Activated B cell treated with CpG ODN at 0.5 μM for 24 hours (primary cell): ENCODE measurements at regions of chr20 and their contacts with region 1.

Region 1: DNA sequence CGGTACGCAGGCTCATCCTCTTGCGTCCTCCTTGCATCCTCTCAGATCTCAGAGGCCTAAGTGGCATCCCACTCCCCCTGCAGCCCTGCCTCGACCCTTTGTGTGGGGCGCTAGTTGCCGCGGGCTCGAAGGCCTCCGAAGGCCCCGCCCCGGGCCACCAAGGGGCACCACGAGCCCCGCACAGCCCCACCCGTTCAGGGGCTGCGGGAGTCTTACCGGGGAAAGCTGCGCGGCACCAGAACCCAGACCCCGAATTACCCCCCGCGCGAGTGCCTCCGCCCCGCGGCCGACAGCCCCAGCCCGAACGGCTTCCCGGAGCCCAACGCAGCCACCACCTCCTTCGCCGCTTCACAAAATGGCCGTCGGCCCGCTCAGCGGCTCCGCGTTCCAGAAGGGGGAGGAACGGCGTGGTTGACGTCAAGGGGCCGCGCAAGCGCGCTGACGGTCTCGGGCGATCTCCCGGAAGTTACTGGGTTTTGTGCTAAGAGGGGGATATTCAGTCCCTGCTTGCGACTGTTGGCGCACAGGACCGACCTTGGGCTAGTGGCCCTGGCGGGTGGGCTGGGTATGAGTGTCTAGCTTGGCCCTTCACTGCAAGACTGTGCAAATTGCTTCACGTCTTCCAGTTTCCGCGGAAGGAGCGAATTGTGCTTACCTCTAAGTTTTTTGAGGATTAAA is at the starts of genes CPNE1 and RBM12:
- DNase-seq: peak; percentile 94
- ATAC-seq: peak; percentile 77
- H3K4me3 Mint-ChIP-seq: peak within 1 kb of the TSS; percentile 94
- H3K27ac Mint-ChIP-seq: peak within 1 kb of the TSS; percentile 99
- H3K4me1 Mint-ChIP-seq: peaks cover 48% of the 10 kb centered on the region
- H3K27me3 Mint-ChIP-seq: no peaks in the 10 kb centered on the region
- CTCF ChIP-seq: no peak
- total RNA-seq, gene CPNE1: 234 and 264 TPM in 2 replicates
- total RNA-seq, gene RBM12: 129 and 139 TPM in 2 replicates

Region 2: DNA sequence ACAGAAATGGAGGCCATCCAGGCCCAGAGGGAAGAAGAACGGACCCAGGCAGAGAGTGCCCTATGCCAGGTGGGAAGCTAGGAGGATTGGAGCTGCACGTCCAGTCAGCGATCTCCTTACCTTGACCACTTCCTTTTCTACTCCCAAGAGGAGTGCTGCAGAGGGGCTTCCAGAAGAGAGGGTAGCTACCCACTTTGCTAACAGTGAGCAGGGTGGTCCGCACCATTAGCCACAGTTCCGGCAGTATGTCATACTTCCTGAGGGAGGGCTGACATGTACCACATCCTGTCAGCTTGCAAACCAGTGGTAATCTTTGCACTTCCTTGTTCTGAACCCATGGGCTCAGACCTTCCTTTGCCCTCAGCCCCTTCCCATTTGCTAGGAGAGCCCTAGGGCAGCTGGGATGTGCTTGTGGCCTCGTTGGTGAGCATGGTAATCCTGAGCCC is 173.9 kb before region 1 on chr20:
- CTCF ChIA-PET with region 1: no interaction called
- POLR2A ChIA-PET with region 1: interaction called, 10 read pairs
- intact Hi-C with region 1: no loop called
- DNase-seq: peak; percentile 44
- ATAC-seq: peak; percentile 99
- H3K4me3 Mint-ChIP-seq: peak overlapping the region; percentile 98
- H3K27ac Mint-ChIP-seq: peak overlapping the region; percentile 98
- H3K4me1 Mint-ChIP-seq: peaks cover 45% of the 10 kb centered on the region
- H3K27me3 Mint-ChIP-seq: no peaks in the 10 kb centered on the region
- CTCF ChIP-seq: no peak

Region 3: GRCh38 chr20:35601008-35601973 is 63.4 kb before region 1 on chr20:
- CTCF ChIA-PET with region 1: interaction called, 3 read pairs
- POLR2A ChIA-PET with region 1: interaction called, 10 read pairs
- intact Hi-C with region 1: loop called (anchors 5 kb)
- DNase-seq: peak; percentile 58
- ATAC-seq: peak; percentile 78
- H3K4me3 Mint-ChIP-seq: peak overlapping the region; percentile 81
- H3K27ac Mint-ChIP-seq: no peak overlapping the region
- H3K4me1 Mint-ChIP-seq: peaks cover 13% of the 10 kb centered on the region
- H3K27me3 Mint-ChIP-seq: peaks cover 29% of the 10 kb centered on the region
- CTCF ChIP-seq: no peak

Region 4: DNA sequence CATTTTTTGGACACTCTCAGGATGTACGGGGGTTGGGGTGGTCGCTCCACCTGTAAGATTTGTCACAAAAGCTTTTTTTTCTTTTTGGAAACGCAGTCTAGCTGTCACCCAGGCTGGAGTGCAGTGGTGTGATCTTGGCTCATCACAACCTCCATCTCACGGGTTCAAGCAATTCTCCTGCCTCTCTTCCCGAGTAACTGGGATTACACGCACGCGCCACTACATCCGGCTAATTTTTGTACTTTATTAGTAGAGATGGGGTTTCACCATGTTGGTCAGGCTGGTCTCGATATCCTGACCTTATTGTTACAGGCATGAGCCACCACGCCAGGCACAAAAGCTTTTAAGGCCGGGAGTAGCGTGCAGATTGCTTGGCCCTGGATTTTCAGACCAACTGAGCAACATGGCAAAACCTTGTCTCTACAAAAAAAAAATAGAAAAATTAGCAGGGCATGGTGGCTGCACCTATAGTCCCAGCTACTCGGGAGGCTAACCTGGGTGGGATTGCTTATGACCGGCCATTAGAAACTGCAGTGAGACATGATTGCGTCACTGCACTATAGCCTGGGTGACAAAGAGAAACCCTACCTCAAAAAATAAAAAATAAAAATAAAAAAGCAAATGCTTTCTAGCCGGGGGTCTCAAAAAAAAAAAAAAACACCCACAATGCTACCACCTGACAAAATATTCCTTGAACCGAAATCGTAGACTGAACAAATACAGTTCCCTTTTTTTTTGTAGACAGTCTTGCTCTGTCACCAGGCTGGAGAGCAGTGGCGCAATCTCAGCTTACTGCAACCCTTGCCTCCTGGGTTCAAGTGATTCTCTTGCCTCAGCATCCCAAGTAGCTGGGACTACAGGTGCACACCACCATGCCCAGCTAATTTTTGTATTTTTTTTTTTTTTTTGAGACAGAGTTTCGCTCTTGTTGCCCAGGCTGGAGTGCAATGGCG is 62.4 kb after region 1 on chr20:
- CTCF ChIA-PET with region 1: no interaction called
- POLR2A ChIA-PET with region 1: no interaction called
- intact Hi-C with region 1: no loop called
- DNase-seq: no peak
- ATAC-seq: no peak
- H3K4me3 Mint-ChIP-seq: no peak overlapping the region
- H3K27ac Mint-ChIP-seq: no peak overlapping the region
- H3K4me1 Mint-ChIP-seq: peaks cover 10% of the 10 kb centered on the region
- H3K27me3 Mint-ChIP-seq: no peaks in the 10 kb centered on the region
- CTCF ChIP-seq: no peak

Region 5: DNA sequence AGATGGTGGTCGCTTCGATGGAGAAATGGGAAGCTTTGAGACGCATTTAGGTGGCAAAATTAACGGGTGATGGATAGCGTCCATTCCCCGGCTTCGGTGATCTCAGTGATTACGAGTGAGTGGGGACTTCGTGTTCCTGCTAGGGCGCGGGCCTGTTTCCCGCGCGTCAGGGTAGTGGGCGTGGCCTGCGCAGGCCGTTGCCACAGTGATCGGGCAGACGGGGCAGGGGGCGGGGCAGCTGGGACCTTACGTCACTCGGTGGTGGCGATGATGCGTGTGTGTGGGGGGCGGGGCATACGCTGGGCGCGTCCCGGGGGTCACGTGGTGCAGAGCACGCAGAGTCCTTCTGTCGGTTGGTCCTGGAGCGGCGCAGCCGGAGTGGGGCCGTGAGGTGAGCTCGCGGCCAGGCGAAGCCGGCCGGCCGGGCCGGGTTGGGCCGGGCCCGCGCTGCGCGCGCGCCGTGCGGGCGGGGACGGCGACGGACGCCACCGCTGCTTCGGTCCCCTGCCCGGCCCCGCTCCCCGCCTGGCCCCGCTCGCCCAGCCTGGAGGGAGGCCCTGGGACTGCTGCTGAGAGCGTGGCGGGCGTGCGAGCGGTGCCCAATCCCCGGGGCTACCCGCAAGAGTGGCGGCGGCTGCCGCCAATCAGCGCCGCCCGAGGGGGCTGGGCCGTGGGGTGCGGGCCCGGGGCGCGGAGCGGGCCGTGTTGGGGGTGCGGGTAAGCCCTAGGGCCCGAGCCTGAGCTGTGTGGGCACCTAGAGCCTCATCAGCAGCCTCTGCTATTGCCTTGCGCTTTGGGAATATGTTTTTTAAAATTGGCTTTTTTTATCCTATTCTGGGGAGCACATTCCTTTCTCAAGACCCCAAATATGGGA is 107.2 kb after region 1 on chr20 and contains the start of gene PHF20:
- CTCF ChIA-PET with region 1: no interaction called
- POLR2A ChIA-PET with region 1: interaction called, 5 read pairs
- intact Hi-C with region 1: loop called (anchors 2 kb)
- DNase-seq: peak; percentile 98
- ATAC-seq: peak; percentile 85
- H3K4me3 Mint-ChIP-seq: peak within 1 kb of the TSS; percentile 86
- H3K27ac Mint-ChIP-seq: peak within 1 kb of the TSS; percentile 95
- H3K4me1 Mint-ChIP-seq: peaks cover 79% of the 10 kb centered on the region
- H3K27me3 Mint-ChIP-seq: no peaks in the 10 kb centered on the region
- CTCF ChIP-seq: no peak
- total RNA-seq, gene PHF20: 72.3 and 86.0 TPM in 2 replicates